PC-3 (cell line): ENCODE measurements at regions of chr7 and their contacts with region 1.

Region 1: DNA sequence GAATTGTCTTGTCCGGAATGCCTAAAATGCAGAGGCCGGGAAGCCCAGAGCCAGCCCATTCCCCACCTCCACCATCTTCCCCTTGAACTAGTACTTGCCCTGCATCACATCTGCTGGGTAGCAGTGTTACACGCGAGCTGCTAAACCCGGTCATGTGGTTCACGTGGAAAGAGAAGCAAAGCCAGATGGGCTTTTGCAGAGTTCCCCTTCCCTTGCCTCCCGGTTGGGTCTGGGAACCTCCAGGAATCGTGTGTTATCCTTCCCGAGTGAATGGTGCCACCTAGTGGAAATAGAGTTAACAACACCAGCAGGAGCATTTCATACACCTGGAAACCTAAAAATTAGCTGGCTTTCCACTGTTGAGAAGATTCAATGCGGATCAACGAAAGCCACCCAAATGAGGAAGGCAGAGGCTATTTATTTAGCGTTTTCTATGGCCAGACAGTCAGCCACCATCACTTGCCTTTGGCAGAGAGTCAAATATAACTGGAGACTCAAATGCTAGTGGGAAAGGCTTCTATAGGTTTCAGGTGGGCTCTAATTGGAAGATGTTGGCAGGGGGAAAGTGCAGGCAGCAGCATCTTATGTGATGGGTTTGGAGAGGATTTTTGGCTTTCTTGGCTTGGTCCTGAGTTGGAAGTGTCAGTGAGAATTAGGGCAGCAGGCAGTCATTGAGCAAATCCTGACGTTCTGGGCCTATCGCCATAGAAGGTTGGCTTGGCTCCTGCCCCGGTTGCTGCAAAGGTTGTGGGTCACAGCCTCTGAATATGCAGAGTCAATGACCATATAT is 12.9 kb upstream of the DENND2A start:
- DNase-seq: peak; percentile 87
- ATAC-seq: peak; percentile 68
- H3K4me3 ChIP-seq: no peak overlapping the region
- H3K27ac ChIP-seq: no peak overlapping the region
- H3K4me1 ChIP-seq: peaks cover 26% of the 10 kb centered on the region
- H3K27me3 ChIP-seq: no peaks in the 10 kb centered on the region
- CTCF ChIP-seq: peak; percentile 90

Region 2: GRCh38 chr7:140397784-140398750 is 255.4 kb before region 1 on chr7 and contains the start of gene SLC37A3:
- CTCF ChIA-PET with region 1: no interaction called
- POLR2A ChIA-PET with region 1: no interaction called
- intact Hi-C with region 1: loop called (anchors 5 kb)
- DNase-seq: peak; percentile 87
- ATAC-seq: peak; percentile 90
- H3K4me3 ChIP-seq: peak within 1 kb of the TSS; percentile 81
- H3K27ac ChIP-seq: peak within 1 kb of the TSS; percentile 60
- H3K4me1 ChIP-seq: peaks cover 23% of the 10 kb centered on the region
- H3K27me3 ChIP-seq: no peaks in the 10 kb centered on the region
- CTCF ChIP-seq: no peak
- total RNA-seq, gene SLC37A3: 21.8 and 22.1 TPM in 2 replicates

Region 3: GRCh38 chr7:140479062-140479738 is 174.3 kb before region 1 on chr7 and contains the start of gene MKRN1:
- CTCF ChIA-PET with region 1: interaction called, 8 read pairs
- POLR2A ChIA-PET with region 1: no interaction called
- intact Hi-C with region 1: loop called (anchors 1 kb)
- DNase-seq: peak; percentile 95
- ATAC-seq: peak; percentile 93
- H3K4me3 ChIP-seq: peak within 1 kb of the TSS; percentile 99
- H3K27ac ChIP-seq: peak within 1 kb of the TSS; percentile 58
- H3K4me1 ChIP-seq: no peaks in the 10 kb centered on the region; the same call in 1 of the 2 replicates
- H3K27me3 ChIP-seq: no peaks in the 10 kb centered on the region
- CTCF ChIP-seq: no peak
- total RNA-seq, gene MKRN1: 71.9 and 78.5 TPM in 2 replicates

Region 4: DNA sequence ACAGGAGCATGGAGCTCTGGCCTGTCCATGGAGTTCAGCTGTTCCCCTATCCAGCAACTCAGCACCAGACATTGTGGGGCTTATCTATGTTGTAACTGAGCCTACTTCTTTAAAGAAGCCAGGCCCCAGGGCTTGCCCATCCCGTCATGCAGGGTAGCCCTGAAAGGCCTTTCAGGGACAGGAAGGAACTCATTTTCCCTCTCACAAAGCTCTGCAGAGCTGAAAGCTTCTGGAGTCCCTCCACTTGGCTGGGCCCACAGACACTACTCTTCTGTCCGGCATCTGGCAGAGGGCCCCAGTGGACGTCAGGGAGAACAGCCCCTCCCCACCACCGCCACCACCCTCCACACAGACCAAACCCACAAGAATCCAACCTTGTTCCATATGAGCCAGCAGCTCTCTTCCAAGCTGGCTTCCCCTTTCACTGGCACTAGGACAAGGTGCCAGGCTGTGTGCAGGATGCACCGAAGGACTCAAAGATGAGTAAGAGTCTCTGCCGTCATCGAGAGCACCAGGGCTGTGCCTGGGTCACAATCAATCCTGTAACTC is 46.0 kb before region 1 on chr7:
- CTCF ChIA-PET with region 1: no interaction called
- POLR2A ChIA-PET with region 1: no interaction called
- intact Hi-C with region 1: loop called (anchors 5 kb)
- DNase-seq: peak; percentile 80
- ATAC-seq: peak; percentile 52
- H3K4me3 ChIP-seq: no peak overlapping the region
- H3K27ac ChIP-seq: peak overlapping the region; percentile 96
- H3K4me1 ChIP-seq: peaks cover 69% of the 10 kb centered on the region
- H3K27me3 ChIP-seq: no peaks in the 10 kb centered on the region
- CTCF ChIP-seq: no peak